ENCODE measurements at regions of chr17 and their contacts with region 1.

Region 1: DNA sequence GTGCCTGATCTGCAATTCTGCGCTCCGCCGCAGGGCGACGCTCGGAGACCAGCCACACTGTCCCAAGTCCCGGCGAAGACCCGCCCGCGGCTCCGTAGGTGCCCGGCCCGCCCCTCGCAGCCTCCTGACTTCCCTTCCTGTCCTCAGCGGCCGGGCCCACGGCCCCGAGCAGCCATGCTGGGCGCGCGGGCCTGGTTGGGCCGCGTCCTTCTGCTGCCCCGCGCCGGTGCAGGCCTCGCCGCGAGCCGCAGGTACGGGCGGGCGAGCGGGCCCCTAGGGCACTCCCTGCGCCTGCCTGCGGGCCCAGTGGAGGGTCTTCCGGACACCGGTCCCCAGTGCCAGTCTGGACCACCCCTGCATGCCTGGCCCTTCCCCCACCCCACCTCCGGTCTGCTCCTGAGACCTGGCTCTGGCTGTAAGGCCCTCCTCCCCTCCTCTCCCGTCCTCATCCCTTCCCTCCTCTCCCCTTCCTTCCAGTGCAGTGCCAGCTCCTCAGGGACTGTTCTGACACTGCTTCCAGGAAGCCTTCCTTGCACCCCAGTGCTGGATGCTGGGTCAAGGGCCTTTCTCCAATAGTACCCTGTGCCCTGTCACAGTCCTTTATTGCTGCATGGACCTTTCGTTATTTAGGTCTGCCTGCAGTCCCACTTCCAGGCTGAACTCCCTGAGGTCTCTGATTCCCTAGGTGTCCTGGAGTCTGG is at the start of gene SPATA20:
- DNase-seq: peak; percentile 92 to 98 (median 97)
- ATAC-seq: peak; percentile 87 to 90
- H3K4me3 ChIP-seq: peak within 1 kb of the TSS; percentile 60
- H3K27ac ChIP-seq: peak within 1 kb of the TSS; percentile 52
- H3K4me1 ChIP-seq: peaks cover 4% of the 10 kb centered on the region
- H3K27me3 ChIP-seq: no peaks in the 10 kb centered on the region
- total RNA-seq, gene SPATA20: 45.9 to 71.8 (median 52.6) TPM

Region 2: DNA sequence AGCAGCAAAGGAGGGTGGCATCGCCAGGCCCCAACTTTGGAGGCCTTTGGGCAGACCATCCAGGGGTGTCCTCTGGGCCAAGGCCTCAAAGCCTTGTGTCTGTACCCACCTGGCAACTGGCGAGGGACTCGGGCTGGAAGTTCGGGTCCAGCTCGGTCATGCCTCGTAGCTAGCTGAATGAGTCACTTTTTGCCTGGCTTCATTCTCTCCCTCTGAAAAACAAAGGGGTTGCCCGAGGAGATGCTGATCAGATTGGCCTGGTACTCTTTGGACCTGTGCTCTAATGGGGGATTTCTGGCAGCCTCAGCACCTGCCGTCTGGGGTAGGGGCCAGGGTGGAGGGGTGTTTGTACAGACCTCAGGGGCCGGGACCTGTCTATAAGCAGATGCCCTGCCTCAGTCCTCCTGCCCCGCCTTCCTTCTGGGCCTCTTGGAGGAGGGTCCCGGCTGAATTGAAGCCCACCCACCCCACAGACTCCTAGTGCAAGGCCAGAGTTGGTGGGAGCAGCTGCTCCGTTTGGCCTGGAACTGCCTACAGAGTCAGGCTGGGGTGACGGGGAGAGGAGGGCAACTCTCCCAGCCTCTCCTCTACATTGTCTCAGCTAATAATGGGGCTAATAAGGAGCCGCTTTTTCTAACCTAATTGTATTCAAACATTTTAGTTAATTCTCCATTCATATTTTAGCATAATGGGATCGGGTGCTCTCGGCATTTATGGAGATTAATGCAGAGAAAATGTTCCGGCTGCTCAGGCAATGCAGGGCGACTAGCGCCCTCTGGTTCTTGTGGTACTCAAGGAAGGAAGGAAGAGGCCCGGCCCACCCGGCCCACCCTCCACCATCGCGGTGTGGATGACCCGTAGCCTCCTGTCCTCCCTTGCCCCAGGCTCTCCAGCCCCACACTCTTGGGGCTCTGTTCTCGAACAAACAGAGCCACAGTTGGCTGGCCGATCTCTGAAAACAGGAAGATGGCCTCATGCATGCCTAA is 66.1 kb after region 1 on chr17:
- intact Hi-C with region 1: loop called in 1 of 4 experiments (anchors 5 kb)
- DNase-seq: peak in 1 of 3 donors; percentile 76
- ATAC-seq: no peak
- H3K4me3 ChIP-seq: no peak overlapping the region
- H3K27ac ChIP-seq: no peak overlapping the region
- H3K4me1 ChIP-seq: no peaks in the 10 kb centered on the region
- H3K27me3 ChIP-seq: no peaks in the 10 kb centered on the region

Region 3: GRCh38 chr17:50626037-50626574 is 78.9 kb after region 1 on chr17:
- intact Hi-C with region 1: loop called (anchors 5 kb)
- DNase-seq: peak; percentile 80 to 91 (median 90)
- ATAC-seq: peak; percentile 71 to 81
- H3K4me3 ChIP-seq: no peak overlapping the region
- H3K27ac ChIP-seq: no peak overlapping the region
- H3K4me1 ChIP-seq: no peaks in the 10 kb centered on the region
- H3K27me3 ChIP-seq: no peaks in the 10 kb centered on the region

Region 4: GRCh38 chr17:50681263-50682210 is 134.4 kb after region 1 on chr17:
- intact Hi-C with region 1: loop called (anchors 5 kb)
- DNase-seq: peak in 1 of 3 donors; percentile 79
- ATAC-seq: peak; percentile 66 to 67
- H3K4me3 ChIP-seq: no peak overlapping the region
- H3K27ac ChIP-seq: no peak overlapping the region
- H3K4me1 ChIP-seq: peaks cover under 1% of the 10 kb centered on the region
- H3K27me3 ChIP-seq: no peaks in the 10 kb centered on the region

Region 5: GRCh38 chr17:50841949-50842354 is 294.8 kb after region 1 on chr17:
- intact Hi-C with region 1: loop called (anchors 5 to 10 kb)
- DNase-seq: peak; percentile 57 to 85 (median 84)
- ATAC-seq: peak; percentile 69 to 73
- H3K4me3 ChIP-seq: no peak overlapping the region
- H3K27ac ChIP-seq: no peak overlapping the region
- H3K4me1 ChIP-seq: peaks cover 2% of the 10 kb centered on the region
- H3K27me3 ChIP-seq: no peaks in the 10 kb centered on the region